Dendritic cell treated with granulocyte-macrophage colony-stimulating factor and Interleukin-4, amounts not matched to agents 40 ng/mL and 50 ng/mL, for 4 days (primary cell): ENCODE measurements at regions of chr19 and their contacts with region 1.

Region 1: GRCh38 chr19:48795055-48795684 is 15.7 kb downstream of the BCAT2 start:
- H3K4me3 Mint-ChIP-seq: peak overlapping the region; percentile 84
- H3K27ac Mint-ChIP-seq: peak overlapping the region; percentile 84
- H3K4me1 Mint-ChIP-seq: peaks cover 14% of the 10 kb centered on the region
- H3K27me3 Mint-ChIP-seq: no peaks in the 10 kb centered on the region

Region 2: DNA sequence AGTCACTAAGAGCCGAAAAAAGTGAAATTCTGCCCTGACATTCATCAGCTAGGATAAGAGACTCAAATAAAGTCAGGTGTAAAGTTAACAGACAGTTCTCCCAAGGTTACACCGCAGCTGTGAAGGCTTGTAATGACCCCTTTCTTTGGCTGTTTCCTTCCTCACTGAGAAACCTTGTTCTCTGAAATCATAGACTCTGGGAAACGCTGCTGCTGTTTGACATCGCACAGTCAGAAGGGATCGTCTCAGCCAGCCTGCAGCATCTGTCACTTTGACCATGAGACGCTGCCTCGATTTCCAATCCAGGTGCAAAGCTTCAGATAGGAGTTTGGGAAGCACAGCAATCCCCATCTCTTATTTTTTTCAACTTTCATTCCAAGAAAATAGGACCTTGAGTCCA is 15.0 kb after region 1 on chr19:
- intact Hi-C with region 1: loop called (anchors 2 kb)
- H3K4me3 Mint-ChIP-seq: peak overlapping the region; percentile 89
- H3K27ac Mint-ChIP-seq: peak overlapping the region; percentile 89
- H3K4me1 Mint-ChIP-seq: peaks cover 42% of the 10 kb centered on the region
- H3K27me3 Mint-ChIP-seq: peaks cover 5% of the 10 kb centered on the region

Region 3: GRCh38 chr19:48837680-48838083 is 42.5 kb after region 1 on chr19:
- intact Hi-C with region 1: loop called (anchors 1 kb)
- H3K4me3 Mint-ChIP-seq: no peak overlapping the region
- H3K27ac Mint-ChIP-seq: no peak overlapping the region
- H3K4me1 Mint-ChIP-seq: peaks cover 38% of the 10 kb centered on the region
- H3K27me3 Mint-ChIP-seq: peaks cover 31% of the 10 kb centered on the region

Region 4: DNA sequence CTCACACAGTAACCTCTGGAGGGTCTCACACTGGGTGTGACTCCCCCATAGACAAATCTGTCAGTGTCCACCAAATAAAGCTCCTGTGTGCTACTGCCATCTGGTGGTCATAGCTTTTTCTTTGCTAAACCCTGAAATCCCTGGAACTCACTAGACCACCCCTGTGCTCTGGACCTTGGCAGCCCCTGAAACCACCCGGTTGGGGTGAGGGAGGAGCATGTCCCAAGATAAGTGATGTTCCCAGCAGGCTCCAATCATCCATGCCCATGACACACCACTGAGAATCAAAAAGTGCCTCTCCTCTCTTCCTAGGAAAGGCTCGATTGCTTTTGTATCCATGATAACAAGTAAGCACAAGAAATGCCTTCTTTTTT is 47.6 kb after region 1 on chr19:
- intact Hi-C with region 1: loop called (anchors 1 kb)
- H3K4me3 Mint-ChIP-seq: no peak overlapping the region
- H3K27ac Mint-ChIP-seq: no peak overlapping the region
- H3K4me1 Mint-ChIP-seq: peaks cover 6% of the 10 kb centered on the region
- H3K27me3 Mint-ChIP-seq: peaks cover 2% of the 10 kb centered on the region

Region 5: GRCh38 chr19:48970923-48971395 is 175.8 kb after region 1 on chr19:
- intact Hi-C with region 1: loop called (anchors 2 kb)
- H3K4me3 Mint-ChIP-seq: peak overlapping the region; percentile 20
- H3K27ac Mint-ChIP-seq: peak overlapping the region; percentile 60
- H3K4me1 Mint-ChIP-seq: peaks cover 40% of the 10 kb centered on the region
- H3K27me3 Mint-ChIP-seq: no peaks in the 10 kb centered on the region